ENCODE measurements at regions of chr11 and their contacts with region 1.

Region 1: DNA sequence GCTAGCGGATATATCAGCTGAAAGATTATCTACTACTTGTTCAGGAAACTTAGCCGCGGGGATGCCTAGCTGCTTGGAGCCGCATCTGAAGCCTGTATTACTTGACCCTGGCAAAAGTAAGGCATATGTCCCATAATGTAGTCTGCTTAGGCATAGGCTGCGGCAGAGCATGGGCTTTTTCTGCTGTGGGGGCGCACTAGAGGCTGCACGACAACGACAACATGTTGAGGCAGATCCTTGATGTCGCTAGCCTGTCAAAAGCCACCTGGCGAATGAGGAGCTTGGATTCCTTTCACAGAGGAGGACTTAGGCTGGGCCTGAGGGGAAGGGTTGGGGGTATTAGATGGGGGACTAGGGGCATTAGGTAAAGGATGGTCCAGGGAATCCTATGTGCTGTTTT is 1.1 kb upstream of the OR52N2 start:
- DNase-seq: no peak
- H3K4me3 ChIP-seq: no peak overlapping the region
- H3K4me3 Mint-ChIP-seq: peak overlapping the region in 1 of 7 donors; percentile 83
- H3K27ac ChIP-seq: no peak overlapping the region
- H3K27ac Mint-ChIP-seq: no peak overlapping the region
- H3K4me1 ChIP-seq: no peaks in the 10 kb centered on the region
- H3K4me1 Mint-ChIP-seq: peaks cover 9 to 13% (median 12%) of the 10 kb centered on the region in 3 donors
- H3K27me3 ChIP-seq: peaks cover 5% of the 10 kb centered on the region
- H3K27me3 Mint-ChIP-seq: peaks cover 20 to 23% of the 10 kb centered on the region in 2 donors

Region 2: GRCh38 chr11:5600374-5600851 is 207.2 kb before region 1 on chr11:
- CTCF ChIA-PET with region 1: interaction called, 10 read pairs
- POLR2A ChIA-PET with region 1: no interaction called
- DNase-seq: peak; percentile 24 to 73 (median 42)
- H3K4me3 ChIP-seq: no peak overlapping the region
- H3K4me3 Mint-ChIP-seq: no peak overlapping the region
- H3K27ac ChIP-seq: no peak overlapping the region
- H3K27ac Mint-ChIP-seq: no peak overlapping the region
- H3K4me1 ChIP-seq: no peaks in the 10 kb centered on the region
- H3K4me1 Mint-ChIP-seq: peaks cover 5 to 13% (median 6%) of the 10 kb centered on the region in 3 donors
- H3K27me3 ChIP-seq: no peaks in the 10 kb centered on the region
- H3K27me3 Mint-ChIP-seq: peaks cover 12 to 19% of the 10 kb centered on the region in 2 donors

Region 3: DNA sequence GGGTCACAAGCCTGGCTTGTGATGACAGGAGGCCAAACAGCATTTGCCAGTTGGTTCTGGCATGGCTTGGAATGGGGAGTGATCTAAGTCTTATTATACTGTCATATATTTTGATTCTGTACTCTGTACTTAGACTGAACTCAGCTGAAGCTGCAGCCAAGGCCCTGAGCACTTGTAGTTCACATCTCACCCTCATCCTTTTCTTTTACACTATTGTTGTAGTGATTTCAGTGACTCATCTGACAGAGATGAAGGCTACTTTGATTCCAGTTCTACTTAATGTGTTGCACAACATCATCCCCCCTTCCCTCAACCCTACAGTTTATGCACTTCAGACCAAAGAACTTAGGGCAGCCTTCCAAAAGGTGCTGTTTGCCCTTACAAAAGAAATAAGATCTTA is 70.5 kb before region 1 on chr11:
- CTCF ChIA-PET with region 1: no interaction called
- POLR2A ChIA-PET with region 1: no interaction called
- DNase-seq: no peak
- H3K4me3 ChIP-seq: no peak overlapping the region
- H3K4me3 Mint-ChIP-seq: no peak overlapping the region
- H3K27ac ChIP-seq: no peak overlapping the region
- H3K27ac Mint-ChIP-seq: no peak overlapping the region
- H3K4me1 ChIP-seq: no peaks in the 10 kb centered on the region
- H3K4me1 Mint-ChIP-seq: no peaks in the 10 kb centered on the region
- H3K27me3 ChIP-seq: no peaks in the 10 kb centered on the region
- H3K27me3 Mint-ChIP-seq: peaks cover 10 to 18% of the 10 kb centered on the region in 2 donors

Region 4: GRCh38 chr11:5791165-5791564 is 16.4 kb before region 1 on chr11 and contains the start of gene OR52N1:
- CTCF ChIA-PET with region 1: no interaction called
- POLR2A ChIA-PET with region 1: no interaction called
- DNase-seq: no peak
- H3K4me3 ChIP-seq: no peak within 1 kb of the TSS
- H3K4me3 Mint-ChIP-seq: no peak within 1 kb of the TSS
- H3K27ac ChIP-seq: no peak within 1 kb of the TSS
- H3K27ac Mint-ChIP-seq: no peak within 1 kb of the TSS
- H3K4me1 ChIP-seq: no peaks in the 10 kb centered on the region
- H3K4me1 Mint-ChIP-seq: no peaks in the 10 kb centered on the region
- H3K27me3 ChIP-seq: no peaks in the 10 kb centered on the region
- H3K27me3 Mint-ChIP-seq: peaks cover 0 to 24% of the 10 kb centered on the region in 2 donors
- total RNA-seq, gene OR52N1: not detected

Region 5: GRCh38 chr11:5837695-5838094 is 30.1 kb after region 1 on chr11:
- CTCF ChIA-PET with region 1: no interaction called
- POLR2A ChIA-PET with region 1: no interaction called
- DNase-seq: no peak
- H3K4me3 ChIP-seq: no peak overlapping the region
- H3K4me3 Mint-ChIP-seq: no peak overlapping the region
- H3K27ac ChIP-seq: no peak overlapping the region
- H3K27ac Mint-ChIP-seq: no peak overlapping the region
- H3K4me1 ChIP-seq: no peaks in the 10 kb centered on the region
- H3K4me1 Mint-ChIP-seq: no peaks in the 10 kb centered on the region
- H3K27me3 ChIP-seq: no peaks in the 10 kb centered on the region
- H3K27me3 Mint-ChIP-seq: peaks cover 17 to 38% of the 10 kb centered on the region in 2 donors

Measured in CD8-positive, alpha-beta memory T cell (primary cell).